CD14-positive monocyte (primary cell): ENCODE measurements at regions of chr19 and their contacts with region 1.

Region 1: DNA sequence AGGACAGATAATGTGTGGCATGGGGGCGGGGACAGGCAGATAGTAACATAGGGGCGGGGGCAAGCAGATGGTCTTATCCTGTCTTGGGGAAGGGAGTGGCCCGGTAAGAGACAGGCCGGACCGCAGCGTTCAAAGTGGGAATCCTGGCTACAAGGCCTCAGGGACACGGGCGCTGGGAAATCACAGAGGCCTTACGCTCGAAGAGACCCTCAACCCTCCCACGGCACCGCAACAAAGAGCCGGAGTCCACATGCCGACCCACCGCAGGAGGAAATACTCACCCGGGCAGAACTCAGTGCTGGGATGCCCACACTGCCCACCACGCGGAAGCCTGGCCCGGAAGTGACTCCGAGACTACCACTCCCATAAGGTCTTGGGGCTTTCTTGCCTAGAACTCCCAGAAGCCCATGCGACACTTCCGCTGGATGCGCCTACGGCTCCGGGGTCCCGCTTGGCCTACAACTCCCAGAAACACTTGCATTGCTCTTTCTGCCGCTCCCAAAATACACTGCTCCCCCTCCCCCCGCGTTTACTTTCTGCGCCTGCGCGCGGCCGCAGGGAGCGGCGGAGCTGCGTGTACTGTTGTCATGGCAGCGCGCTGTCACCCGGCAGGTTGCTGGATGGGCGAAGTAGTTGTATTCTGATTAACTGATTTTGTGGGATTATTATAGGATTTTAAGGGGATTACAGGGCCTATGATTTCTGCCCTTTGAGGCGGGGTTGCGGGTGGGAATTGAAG is at the start of gene CTU1:
- DNase-seq: peak; percentile 99 to 100 (median 99)
- H3K4me3 ChIP-seq: peak within 1 kb of the TSS; percentile 64 to 84 (median 84)
- H3K4me3 Mint-ChIP-seq: peak within 1 kb of the TSS; percentile 94 to 99
- H3K27ac ChIP-seq: peak within 1 kb of the TSS; percentile 31 to 78
- H3K27ac Mint-ChIP-seq: peak within 1 kb of the TSS; percentile 91 to 99 (median 98)
- H3K4me1 ChIP-seq: peaks cover 29 to 38% of the 10 kb centered on the region in 2 donors
- H3K4me1 Mint-ChIP-seq: peaks cover 38% of the 10 kb centered on the region
- H3K27me3 ChIP-seq: no peaks in the 10 kb centered on the region
- H3K27me3 Mint-ChIP-seq: peaks cover 2 to 6% (median 2%) of the 10 kb centered on the region in 3 donors
- CTCF ChIP-seq: no peak
- polyA plus RNA-seq, gene CTU1: 0.75 to 3.0 (median 2.9) TPM

Region 2: DNA sequence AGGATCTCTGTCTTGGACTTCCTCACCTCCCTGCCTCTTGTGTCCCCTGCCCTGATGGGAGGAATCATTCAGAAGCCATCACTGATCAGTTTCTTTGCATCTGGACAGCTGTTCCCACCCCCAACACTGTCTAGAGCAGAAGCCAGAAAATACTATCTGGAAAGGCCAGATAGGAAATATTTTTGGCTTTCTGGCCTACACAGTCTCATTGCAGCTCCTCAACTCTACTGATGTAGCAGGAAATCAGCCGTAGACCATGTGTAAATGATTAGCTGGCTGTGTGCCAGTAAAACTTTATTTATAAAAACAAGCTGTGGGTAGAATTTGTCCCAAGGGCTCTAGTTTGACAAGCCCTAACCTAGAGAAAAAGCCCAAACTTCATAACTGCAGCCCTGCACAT is 39.4 kb after region 1 on chr19:
- intact Hi-C with region 1: loop called (anchors 5 kb)
- DNase-seq: no peak
- H3K4me3 ChIP-seq: no peak overlapping the region
- H3K4me3 Mint-ChIP-seq: no peak overlapping the region
- H3K27ac ChIP-seq: peak overlapping the region; percentile 14 to 63
- H3K27ac Mint-ChIP-seq: peak overlapping the region in 5 of 7 donors; percentile 59 to 95 (median 87)
- H3K4me1 ChIP-seq: peaks cover 67 to 86% of the 10 kb centered on the region in 2 donors
- H3K4me1 Mint-ChIP-seq: peaks cover 80% of the 10 kb centered on the region
- H3K27me3 ChIP-seq: no peaks in the 10 kb centered on the region
- H3K27me3 Mint-ChIP-seq: peaks cover 0 to 2% (median 2%) of the 10 kb centered on the region in 3 donors
- CTCF ChIP-seq: no peak

Region 3: GRCh38 chr19:51593969-51594773 is 485.9 kb after region 1 on chr19:
- intact Hi-C with region 1: loop called (anchors 10 kb)
- DNase-seq: peak; percentile 95 to 99 (median 96)
- H3K4me3 ChIP-seq: peak overlapping the region; percentile 67 to 93 (median 67)
- H3K4me3 Mint-ChIP-seq: peak overlapping the region; percentile 84 to 99
- H3K27ac ChIP-seq: peak overlapping the region; percentile 3 to 45
- H3K27ac Mint-ChIP-seq: peak overlapping the region; percentile 66 to 88 (median 81)
- H3K4me1 ChIP-seq: peaks cover 23 to 28% of the 10 kb centered on the region in 2 donors
- H3K4me1 Mint-ChIP-seq: peaks cover 29% of the 10 kb centered on the region
- H3K27me3 ChIP-seq: peaks cover 0 to 4% of the 10 kb centered on the region in 2 donors
- H3K27me3 Mint-ChIP-seq: peaks cover under 1 to 19% (median 10%) of the 10 kb centered on the region in 3 donors
- CTCF ChIP-seq: no peak